ENCODE measurements at regions of chr5 and their contacts with region 1.

Region 1: GRCh38 chr5:160342403-160342941 is 28.0 kb downstream of the C1QTNF2 start:
- DNase-seq: no peak
- H3K4me3 Mint-ChIP-seq: no peak overlapping the region
- H3K27ac Mint-ChIP-seq: no peak overlapping the region
- H3K4me1 Mint-ChIP-seq: peaks cover 2% of the 10 kb centered on the region
- H3K27me3 Mint-ChIP-seq: peaks cover 2% of the 10 kb centered on the region

Region 2: DNA sequence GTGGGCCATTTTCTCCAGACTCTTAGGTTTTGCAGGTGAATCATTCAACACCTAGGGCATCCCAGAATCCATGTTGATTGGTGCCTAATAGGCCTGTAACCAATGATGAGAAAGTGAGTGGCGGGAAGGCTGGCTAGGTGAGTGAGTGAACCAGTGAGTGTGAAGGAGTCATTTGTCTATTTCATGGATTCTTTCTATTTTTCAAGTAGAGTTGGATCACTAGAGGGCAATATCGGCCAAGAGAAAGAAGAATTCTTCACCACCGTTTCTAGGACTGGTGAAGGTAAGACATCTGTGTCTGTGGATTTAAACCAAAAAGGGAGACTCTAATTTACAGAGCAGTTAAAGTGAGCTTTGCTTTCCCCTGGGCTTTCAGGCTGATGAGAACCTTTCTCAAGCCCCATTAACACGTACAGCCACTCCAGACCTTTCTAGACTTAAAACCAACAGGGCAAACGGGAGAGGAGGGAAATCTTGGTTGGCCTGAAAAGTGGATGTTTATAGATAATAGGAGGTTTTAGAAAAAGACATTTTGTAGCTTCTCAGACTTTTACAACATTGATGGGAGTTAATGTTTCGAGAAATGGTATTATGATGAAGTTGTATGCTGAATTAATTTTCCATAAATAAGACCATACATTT is 897.9 kb before region 1 on chr5:
- CTCF ChIA-PET with region 1: no interaction called
- POLR2A ChIA-PET with region 1: no interaction called
- intact Hi-C with region 1: loop called (anchors 5 kb)
- DNase-seq: no peak
- H3K4me3 Mint-ChIP-seq: no peak overlapping the region
- H3K27ac Mint-ChIP-seq: no peak overlapping the region
- H3K4me1 Mint-ChIP-seq: no peaks in the 10 kb centered on the region
- H3K27me3 Mint-ChIP-seq: peaks cover 6% of the 10 kb centered on the region

Region 3: DNA sequence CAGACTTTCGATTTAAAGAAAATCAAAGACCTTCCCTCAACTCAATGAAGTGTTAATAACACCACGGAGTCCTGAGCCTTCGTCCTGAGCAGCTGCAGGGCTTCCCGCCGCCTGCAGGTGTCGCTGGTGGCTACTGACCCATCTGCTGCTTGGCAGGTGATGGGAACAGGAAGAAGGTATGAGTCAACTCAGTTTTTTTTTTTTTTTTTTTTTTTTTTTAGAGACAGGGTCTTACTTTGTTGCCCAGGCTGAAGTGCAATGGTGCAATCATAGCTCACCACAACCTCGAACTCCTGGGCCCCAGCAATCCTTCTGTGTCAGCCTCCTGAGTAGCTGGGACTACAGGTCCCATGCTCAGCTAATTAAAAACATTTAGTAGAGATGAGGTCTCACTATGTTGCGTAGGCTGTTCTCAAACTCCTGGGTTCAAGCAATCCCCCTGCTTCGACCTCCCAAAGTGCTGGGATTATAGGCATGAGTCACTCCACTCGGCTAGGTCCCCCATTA is 826.5 kb before region 1 on chr5:
- CTCF ChIA-PET with region 1: no interaction called
- POLR2A ChIA-PET with region 1: no interaction called
- intact Hi-C with region 1: loop called (anchors 5 kb)
- DNase-seq: peak; percentile 87
- H3K4me3 Mint-ChIP-seq: no peak overlapping the region
- H3K27ac Mint-ChIP-seq: no peak overlapping the region
- H3K4me1 Mint-ChIP-seq: peaks cover 9% of the 10 kb centered on the region
- H3K27me3 Mint-ChIP-seq: peaks cover 2% of the 10 kb centered on the region

Region 4: GRCh38 chr5:160199410-160199911 is 143.0 kb before region 1 on chr5:
- CTCF ChIA-PET with region 1: interaction called, 104 read pairs
- POLR2A ChIA-PET with region 1: no interaction called
- intact Hi-C with region 1: loop called (anchors 1 kb)
- DNase-seq: peak; percentile 77
- H3K4me3 Mint-ChIP-seq: peak overlapping the region; percentile 64
- H3K27ac Mint-ChIP-seq: no peak overlapping the region
- H3K4me1 Mint-ChIP-seq: peaks cover 3% of the 10 kb centered on the region
- H3K27me3 Mint-ChIP-seq: peaks cover 8% of the 10 kb centered on the region

Region 5: DNA sequence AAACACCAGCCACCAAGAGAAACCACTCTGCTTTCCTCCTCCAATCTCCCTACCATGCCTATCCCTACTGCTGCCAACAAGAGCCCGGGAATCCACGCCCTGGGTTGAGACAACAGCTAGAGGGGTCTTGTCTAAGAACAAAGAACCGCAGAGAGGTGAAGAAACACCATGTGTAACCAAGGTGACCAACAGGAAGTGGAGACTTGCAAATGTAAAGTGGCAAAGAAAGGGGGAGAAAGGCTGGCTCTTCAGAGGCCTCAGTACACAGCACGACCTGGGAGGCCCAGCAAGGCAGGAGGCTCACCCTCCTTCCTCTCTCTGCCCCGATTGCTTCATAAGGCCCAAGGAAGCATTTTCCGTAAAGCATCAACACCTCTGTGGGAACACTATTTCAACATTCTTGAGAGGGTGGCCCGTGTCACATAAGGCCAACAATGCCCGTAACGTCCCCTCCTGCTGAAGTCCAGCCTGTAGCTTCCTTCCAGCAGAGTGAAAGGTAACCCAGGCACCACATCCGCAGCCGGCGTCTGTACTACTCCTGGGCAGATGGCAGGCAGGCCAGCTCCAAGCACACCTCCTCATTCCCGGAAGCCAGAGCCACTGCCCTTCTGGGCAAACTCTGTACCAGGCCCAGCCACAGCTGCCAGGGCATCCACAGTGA is 48.4 kb before region 1 on chr5:
- CTCF ChIA-PET with region 1: no interaction called
- POLR2A ChIA-PET with region 1: no interaction called
- intact Hi-C with region 1: no loop called
- DNase-seq: no peak
- H3K4me3 Mint-ChIP-seq: no peak overlapping the region
- H3K27ac Mint-ChIP-seq: no peak overlapping the region
- H3K4me1 Mint-ChIP-seq: no peaks in the 10 kb centered on the region
- H3K27me3 Mint-ChIP-seq: peaks cover 3% of the 10 kb centered on the region

Region 6: GRCh38 chr5:160390787-160391696 is 48.6 kb after region 1 on chr5:
- CTCF ChIA-PET with region 1: interaction called, 11 read pairs
- POLR2A ChIA-PET with region 1: no interaction called
- intact Hi-C with region 1: loop called (anchors 1 kb)
- DNase-seq: no peak
- H3K4me3 Mint-ChIP-seq: no peak overlapping the region
- H3K27ac Mint-ChIP-seq: no peak overlapping the region
- H3K4me1 Mint-ChIP-seq: no peaks in the 10 kb centered on the region
- H3K27me3 Mint-ChIP-seq: no peaks in the 10 kb centered on the region

Measured in activated CD4-positive, alpha-beta memory T cell treated with anti-CD3 and anti-CD28 coated beads for 36 hours (primary cell).